ENCODE measurements at regions of chr22 and their contacts with region 1.

Region 1: GRCh38 chr22:28009272-28009827 is 90.3 kb upstream of the PITPNB start:
- DNase-seq: peak; percentile 87
- H3K4me3 Mint-ChIP-seq: no peak overlapping the region
- H3K27ac Mint-ChIP-seq: no peak overlapping the region
- H3K4me1 Mint-ChIP-seq: no peaks in the 10 kb centered on the region
- H3K27me3 Mint-ChIP-seq: peaks cover 39% of the 10 kb centered on the region
- CTCF ChIP-seq: peak; percentile 91

Region 2: GRCh38 chr22:27880778-27881394 is 128.5 kb before region 1 on chr22:
- CTCF ChIA-PET with region 1: interaction called, 3 read pairs
- intact Hi-C with region 1: loop called (anchors 1 kb)
- DNase-seq: peak; percentile 46
- H3K4me3 Mint-ChIP-seq: no peak overlapping the region
- H3K27ac Mint-ChIP-seq: no peak overlapping the region
- H3K4me1 Mint-ChIP-seq: peaks cover 6% of the 10 kb centered on the region
- H3K27me3 Mint-ChIP-seq: no peaks in the 10 kb centered on the region
- CTCF ChIP-seq: peak; percentile 38

Region 3: DNA sequence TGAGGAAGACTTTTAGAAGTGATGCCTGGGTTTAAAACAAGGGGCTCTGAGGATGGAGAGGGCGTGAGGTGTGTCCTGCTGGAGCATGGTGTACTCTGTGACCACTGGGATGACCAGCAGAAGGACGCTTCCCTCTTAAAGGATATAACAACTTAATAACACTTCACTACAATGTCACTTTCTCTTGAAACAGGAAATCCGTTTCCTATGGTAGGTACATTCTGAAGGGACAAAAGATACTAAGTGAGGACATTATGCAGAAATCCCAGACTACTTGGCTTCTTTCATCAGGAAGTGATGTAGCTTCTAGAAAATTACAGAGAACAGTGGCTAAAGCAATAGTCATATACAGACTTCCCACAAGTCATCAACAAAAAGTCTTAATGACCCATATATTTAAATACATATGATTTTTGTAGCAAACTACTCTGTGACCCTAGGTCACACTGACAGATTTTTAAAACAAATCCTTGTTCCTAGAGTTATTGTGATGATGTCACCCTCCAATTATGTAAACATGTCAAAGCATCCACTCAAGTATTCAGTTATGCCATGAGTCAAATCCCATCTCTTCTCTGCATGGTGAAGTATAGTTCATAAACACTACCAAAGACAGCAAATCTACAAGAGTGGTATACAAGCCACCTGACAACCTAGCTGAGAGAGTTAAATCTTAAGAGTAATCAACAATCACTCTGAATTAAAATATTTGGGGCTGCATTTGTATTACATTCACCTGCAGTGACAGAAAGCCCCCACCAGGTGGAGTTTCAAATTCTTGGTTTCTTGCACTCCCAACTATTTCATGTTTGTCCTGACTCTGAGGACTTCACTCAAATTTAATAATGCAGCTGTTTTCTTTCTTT is 123.1 kb before region 1 on chr22:
- CTCF ChIA-PET with region 1: interaction called, 3 read pairs
- intact Hi-C with region 1: loop called (anchors 1 kb)
- DNase-seq: peak; percentile 43
- H3K4me3 Mint-ChIP-seq: no peak overlapping the region
- H3K27ac Mint-ChIP-seq: no peak overlapping the region
- H3K4me1 Mint-ChIP-seq: peaks cover 31% of the 10 kb centered on the region
- H3K27me3 Mint-ChIP-seq: no peaks in the 10 kb centered on the region
- CTCF ChIP-seq: peak; percentile 52

Region 4: GRCh38 chr22:28151151-28151816 is 141.9 kb after region 1 on chr22:
- CTCF ChIA-PET with region 1: interaction called, 11 read pairs
- intact Hi-C with region 1: no loop called
- DNase-seq: no peak
- H3K4me3 Mint-ChIP-seq: no peak overlapping the region
- H3K27ac Mint-ChIP-seq: no peak overlapping the region
- H3K4me1 Mint-ChIP-seq: no peaks in the 10 kb centered on the region
- H3K27me3 Mint-ChIP-seq: peaks cover 34% of the 10 kb centered on the region
- CTCF ChIP-seq: no peak